ENCODE measurements at regions of chr4 and their contacts with region 1.

Region 1: DNA sequence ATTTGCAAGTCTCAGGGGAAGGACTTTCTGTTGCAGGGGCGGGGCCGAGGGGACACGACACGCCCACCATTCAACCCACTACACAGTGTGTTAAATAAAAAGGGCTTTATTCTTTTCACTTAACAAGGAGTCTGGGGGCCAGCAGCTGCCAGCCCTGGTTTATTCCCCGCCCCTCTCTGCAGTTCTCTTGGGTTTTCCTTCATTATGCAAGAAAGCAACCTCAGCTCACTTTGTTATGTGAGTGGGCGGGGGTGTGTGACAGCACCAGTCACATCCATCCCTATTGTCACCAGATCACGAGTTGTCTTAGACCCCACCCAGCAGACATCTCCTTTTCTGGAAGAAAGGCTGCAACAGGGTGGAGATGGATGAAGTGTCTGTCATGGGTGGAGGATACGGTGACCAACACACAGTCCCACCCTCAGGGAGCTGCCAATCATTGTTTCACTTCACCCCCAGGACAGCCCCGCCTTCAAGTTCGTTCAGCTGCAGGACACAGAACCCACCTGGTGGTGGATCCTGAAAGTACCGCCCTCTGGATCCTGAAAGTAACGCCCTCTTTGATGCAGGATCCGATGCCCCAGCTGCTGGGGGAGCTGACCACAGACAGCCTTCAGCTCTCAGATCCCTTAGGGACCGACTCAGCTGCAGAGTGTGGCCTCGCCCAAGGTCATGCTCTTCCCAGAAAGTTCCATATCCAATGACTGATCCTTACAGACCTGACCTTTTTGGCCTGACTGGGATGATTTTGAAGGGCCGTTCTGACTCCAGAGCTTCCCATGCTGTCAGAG is 79.6 kb downstream of the SMIM20 start:
- DNase-seq: peak; percentile 43
- ATAC-seq: peak; percentile 51
- H3K4me3 Mint-ChIP-seq: no peak overlapping the region
- H3K27ac Mint-ChIP-seq: no peak overlapping the region
- H3K4me1 Mint-ChIP-seq: peaks cover 10% of the 10 kb centered on the region
- H3K27me3 Mint-ChIP-seq: peaks cover 2% of the 10 kb centered on the region

Region 2: DNA sequence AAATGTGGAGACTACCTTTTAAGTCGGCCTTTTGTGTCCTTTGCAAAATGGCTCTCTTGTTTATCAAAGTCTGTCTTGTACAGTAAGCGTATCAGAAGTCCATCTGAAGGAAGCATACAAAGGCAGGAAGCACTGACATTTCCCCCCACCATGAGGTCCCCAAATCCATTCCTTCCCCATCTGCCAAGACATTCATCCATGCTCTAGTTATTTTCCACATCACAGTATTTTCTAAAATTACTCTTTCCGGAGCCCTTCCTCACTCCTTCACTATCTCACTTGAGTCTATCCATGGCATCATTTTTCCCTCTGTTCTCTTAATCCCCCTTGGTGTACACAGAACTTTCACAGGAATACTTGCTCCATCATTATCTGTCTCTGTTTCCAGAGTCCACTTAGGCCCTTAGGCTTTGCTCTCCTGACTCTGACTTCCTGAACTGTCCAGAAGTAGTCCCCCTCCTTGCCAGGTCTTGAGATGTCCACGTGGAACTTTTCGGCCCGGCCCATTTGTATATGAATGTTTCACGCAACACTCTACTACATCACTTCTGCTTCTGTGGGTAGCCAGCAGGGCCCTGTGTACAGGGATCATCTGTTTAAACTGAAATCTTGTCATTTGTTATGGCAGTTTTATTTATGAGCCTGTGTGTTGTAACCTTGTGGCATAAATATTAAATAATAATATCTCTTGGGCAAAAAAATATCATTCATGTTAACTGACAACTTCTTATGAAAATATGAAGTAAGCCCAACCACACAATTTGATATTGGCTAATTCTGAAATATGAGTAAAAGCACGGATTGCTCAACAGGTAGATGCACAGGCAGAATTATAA is 132.8 kb before region 1 on chr4:
- CTCF ChIA-PET with region 1: no interaction called
- DNase-seq: no peak
- ATAC-seq: no peak
- H3K4me3 Mint-ChIP-seq: peak overlapping the region; percentile 98
- H3K27ac Mint-ChIP-seq: peak overlapping the region; percentile 100
- H3K4me1 Mint-ChIP-seq: peaks cover 52% of the 10 kb centered on the region
- H3K27me3 Mint-ChIP-seq: no peaks in the 10 kb centered on the region

Region 3: GRCh38 chr4:25977397-25978170 is 16.0 kb before region 1 on chr4:
- CTCF ChIA-PET with region 1: interaction called, 25 read pairs
- DNase-seq: no peak
- ATAC-seq: no peak
- H3K4me3 Mint-ChIP-seq: no peak overlapping the region
- H3K27ac Mint-ChIP-seq: no peak overlapping the region
- H3K4me1 Mint-ChIP-seq: no peaks in the 10 kb centered on the region
- H3K27me3 Mint-ChIP-seq: peaks cover 5% of the 10 kb centered on the region

Region 4: DNA sequence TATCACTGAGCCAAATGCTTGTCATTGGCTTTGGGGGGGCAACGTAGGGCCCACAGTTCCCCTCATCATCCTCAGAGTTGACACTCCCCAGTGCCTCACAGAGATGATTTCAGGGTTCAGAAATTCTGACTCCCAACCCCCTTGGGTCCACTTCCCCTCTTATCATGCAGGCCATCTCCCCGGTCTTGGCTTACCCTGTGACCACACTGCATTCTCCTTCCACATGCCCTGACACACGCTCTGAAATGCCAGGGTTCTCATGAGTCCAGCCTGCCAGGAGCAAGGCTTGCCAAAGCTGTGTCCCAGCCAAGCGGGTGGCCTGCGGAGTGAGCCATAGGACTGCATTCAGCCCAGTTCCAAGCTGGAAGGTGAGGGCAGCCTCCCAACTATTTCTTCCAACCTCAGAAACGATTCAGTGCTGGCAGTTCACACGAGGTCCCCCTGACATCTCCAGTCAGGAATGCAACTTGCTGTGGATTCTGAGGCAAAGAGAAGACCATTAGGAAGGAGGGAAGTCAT is 21.6 kb after region 1 on chr4:
- CTCF ChIA-PET with region 1: interaction called, 10 read pairs
- DNase-seq: no peak
- ATAC-seq: no peak
- H3K4me3 Mint-ChIP-seq: no peak overlapping the region
- H3K27ac Mint-ChIP-seq: no peak overlapping the region
- H3K4me1 Mint-ChIP-seq: peaks cover 9% of the 10 kb centered on the region
- H3K27me3 Mint-ChIP-seq: peaks cover 23% of the 10 kb centered on the region

Region 5: GRCh38 chr4:26418107-26418506 is 424.5 kb after region 1 on chr4:
- CTCF ChIA-PET with region 1: interaction called, 13 read pairs
- DNase-seq: no peak
- ATAC-seq: no peak
- H3K4me3 Mint-ChIP-seq: no peak overlapping the region
- H3K27ac Mint-ChIP-seq: no peak overlapping the region
- H3K4me1 Mint-ChIP-seq: no peaks in the 10 kb centered on the region
- H3K27me3 Mint-ChIP-seq: no peaks in the 10 kb centered on the region

Measured in activated CD8-positive, alpha-beta memory T cell treated with anti-CD3 and anti-CD28 coated beads, Interleukin-2, amount 10 ng/mL, durations not matched to agents 7 days and 5 days (primary cell).